Gastrocnemius medialis (tissue), 4 donors: ENCODE measurements at regions of chr18 and their contacts with region 1.

Region 1: DNA sequence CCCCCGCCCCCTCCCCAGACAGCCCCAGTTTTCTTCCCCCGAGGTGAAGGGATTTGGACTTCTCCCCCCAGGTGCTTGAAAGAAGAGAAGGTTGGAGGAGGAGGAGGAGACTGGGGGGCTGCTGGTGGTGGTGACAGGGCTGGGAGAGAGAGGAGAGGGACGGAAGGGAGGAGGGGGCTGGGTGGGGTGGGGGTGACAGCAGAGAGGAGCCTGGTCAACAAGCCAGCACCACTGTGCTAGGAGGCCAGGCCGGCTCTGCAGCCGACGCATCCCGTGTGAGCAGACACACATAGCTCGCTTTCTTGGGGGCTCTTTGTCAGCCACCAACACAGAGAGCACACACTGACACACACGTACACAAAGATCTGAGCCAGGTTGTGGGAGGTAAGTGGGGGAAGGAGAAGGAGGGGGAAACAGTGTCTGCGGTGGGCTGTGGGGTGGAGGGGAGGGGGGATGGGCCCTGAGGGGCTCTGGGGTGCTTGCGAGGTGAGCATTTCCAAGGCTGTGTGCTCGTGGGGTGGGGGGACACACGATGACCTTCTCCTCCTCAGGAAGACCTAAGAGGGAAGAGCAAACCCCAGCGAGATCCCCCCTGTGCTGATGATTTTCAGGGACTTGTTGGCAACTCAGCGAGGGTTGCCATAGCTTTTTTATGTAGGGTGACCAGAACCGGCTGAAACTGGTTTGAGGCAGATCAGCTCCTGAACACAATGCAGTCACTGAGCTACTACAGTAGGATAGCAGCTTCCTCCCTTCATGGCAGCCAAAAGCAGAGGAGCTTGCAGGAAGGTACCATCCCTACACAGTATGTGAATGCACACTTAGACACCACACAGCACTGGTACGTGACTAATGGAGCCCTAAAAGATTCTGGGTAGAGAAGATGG is at the start of gene ZNF532:
- DNase-seq: no peak
- ATAC-seq: peak; percentile 7 to 15
- H3K4me3 ChIP-seq: peak within 1 kb of the TSS; percentile 61 to 69 (median 66)
- H3K27ac ChIP-seq: peak within 1 kb of the TSS; percentile 93 to 97 (median 96)
- H3K4me1 ChIP-seq: peaks cover 80 to 89% of the 10 kb centered on the region in 2 donors
- H3K27me3 ChIP-seq: no peaks in the 10 kb centered on the region
- CTCF ChIP-seq: no peak
- POLR2A ChIP-seq: no peak
- total RNA-seq, gene ZNF532: 54.7 to 124 (median 91.2) TPM

Region 2: DNA sequence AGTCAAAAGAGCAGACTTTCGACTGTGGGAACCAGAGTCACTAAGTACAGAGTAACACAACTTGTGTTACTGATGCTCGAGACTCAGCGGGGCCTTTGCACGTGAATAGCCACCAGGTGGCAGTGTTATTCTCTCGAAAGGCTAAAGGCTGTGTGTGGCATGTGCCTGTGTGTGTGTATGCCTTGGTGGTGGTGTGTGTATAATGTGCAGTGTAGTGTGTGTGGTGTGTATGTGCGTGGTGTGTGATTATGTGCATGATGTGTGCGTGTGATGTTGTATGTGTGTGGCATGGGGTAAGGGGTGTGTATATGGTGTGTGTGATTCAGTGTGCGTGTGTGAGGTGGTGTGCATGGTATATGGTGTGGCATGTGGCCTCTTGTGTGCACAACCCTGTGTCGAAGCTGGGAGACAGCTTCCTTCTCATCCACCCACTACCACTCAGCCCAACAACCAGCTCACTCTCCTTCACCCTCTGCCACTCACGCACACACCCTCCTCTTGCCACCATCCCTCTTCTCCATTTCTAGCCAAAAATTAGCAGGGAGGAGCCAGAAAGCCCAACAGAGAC is 82.7 kb before region 1 on chr18:
- in situ Hi-C with region 1: no loop called
- intact Hi-C with region 1: loop called (anchors 5 kb)
- DNase-seq: peak; percentile 64 to 74
- ATAC-seq: peak; percentile 87
- H3K4me3 ChIP-seq: no peak overlapping the region
- H3K27ac ChIP-seq: no peak overlapping the region
- H3K4me1 ChIP-seq: peaks cover 4 to 12% of the 10 kb centered on the region in 2 donors
- H3K27me3 ChIP-seq: no peaks in the 10 kb centered on the region
- CTCF ChIP-seq: peak; percentile 91 to 95 (median 92)
- POLR2A ChIP-seq: no peak

Region 3: DNA sequence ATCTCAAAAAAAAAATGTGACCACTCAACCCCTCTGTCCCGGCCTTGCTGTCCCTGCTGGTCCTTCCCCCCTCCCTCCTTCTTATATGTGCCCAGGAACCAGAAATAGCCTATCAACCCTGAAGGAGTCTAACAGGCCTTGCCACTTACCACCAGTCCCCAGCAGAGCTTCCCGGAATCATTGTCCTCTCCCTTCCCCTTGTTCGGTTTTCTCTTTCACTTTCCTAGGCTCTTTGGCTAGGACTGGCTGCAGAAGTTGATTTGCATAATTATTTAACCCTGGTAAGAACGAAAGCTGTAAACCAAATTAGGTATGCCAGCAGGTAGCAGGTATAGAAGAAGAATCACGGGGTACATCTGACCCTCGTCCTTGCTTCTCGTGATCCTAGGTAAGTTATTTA is 72.3 kb before region 1 on chr18:
- in situ Hi-C with region 1: no loop called
- intact Hi-C with region 1: loop called (anchors 5 kb)
- DNase-seq: no peak
- ATAC-seq: no peak
- H3K4me3 ChIP-seq: no peak overlapping the region
- H3K27ac ChIP-seq: peak overlapping the region in 3 of 4 donors; percentile 38 to 78 (median 68)
- H3K4me1 ChIP-seq: peaks cover 8 to 19% of the 10 kb centered on the region in 2 donors
- H3K27me3 ChIP-seq: no peaks in the 10 kb centered on the region
- CTCF ChIP-seq: no peak
- POLR2A ChIP-seq: no peak

Region 4: GRCh38 chr18:58991167-58991798 is 126.9 kb after region 1 on chr18:
- in situ Hi-C with region 1: no loop called
- intact Hi-C with region 1: loop called (anchors 5 kb)
- DNase-seq: peak in 1 of 2 donors; percentile 50
- ATAC-seq: peak; percentile 70 to 73
- H3K4me3 ChIP-seq: peak overlapping the region in 2 of 4 donors; percentile 2 to 18
- H3K27ac ChIP-seq: peak overlapping the region; percentile 88 to 92 (median 90)
- H3K4me1 ChIP-seq: peaks cover 41 to 55% of the 10 kb centered on the region in 2 donors
- H3K27me3 ChIP-seq: no peaks in the 10 kb centered on the region
- CTCF ChIP-seq: peak in 4 of 5 experiments; percentile 35 to 50 (median 42)
- POLR2A ChIP-seq: no peak